Right lobe of liver (tissue), 6 donors: ENCODE measurements at regions of chr5 and their contacts with region 1.

Region 1: DNA sequence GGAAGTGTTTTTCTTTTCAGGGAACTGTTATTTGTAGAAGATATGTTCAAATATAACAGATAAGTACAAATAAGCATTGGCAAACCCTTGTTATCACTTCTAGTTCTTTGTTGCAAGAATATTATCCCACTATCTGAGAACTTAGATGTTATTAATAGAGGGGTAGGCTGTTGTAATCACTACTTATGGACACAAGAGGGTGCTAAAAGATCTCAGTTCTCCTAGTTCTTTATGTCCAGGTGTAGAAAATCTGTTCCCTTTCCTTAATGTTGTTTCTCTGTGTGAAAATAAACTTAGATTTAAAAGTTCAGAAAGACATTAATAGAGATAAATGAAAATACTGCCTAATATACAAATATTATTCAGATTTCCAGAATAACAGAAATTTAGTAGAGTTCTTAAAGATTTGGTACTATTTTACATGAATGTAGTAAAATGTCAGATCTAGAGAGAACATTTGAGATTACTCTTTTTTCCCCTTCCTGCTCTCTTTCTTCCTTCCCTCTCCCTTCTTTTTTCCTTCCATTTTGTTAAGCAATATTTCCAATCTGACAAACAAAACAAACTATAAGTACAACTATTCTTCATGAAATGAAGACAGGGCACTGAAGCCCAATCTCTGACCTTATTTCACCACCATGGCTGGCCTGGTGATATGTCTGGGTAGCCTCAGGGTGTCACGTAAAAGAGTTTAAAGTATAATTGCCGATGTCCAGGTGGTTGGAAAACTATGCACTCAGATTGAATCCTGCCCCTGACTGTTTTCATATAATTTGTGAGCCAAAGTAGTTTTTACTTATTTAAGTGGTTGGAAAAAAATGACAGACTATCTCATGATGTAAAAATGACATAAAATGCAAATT is 43.6 kb upstream of the C5orf46 start:
- DNase-seq: no peak
- ATAC-seq: peak; percentile 87 to 93 (median 91)
- H3K4me3 ChIP-seq: no peak overlapping the region
- H3K27ac ChIP-seq: no peak overlapping the region
- H3K4me1 ChIP-seq: no peaks in the 10 kb centered on the region
- H3K27me3 ChIP-seq: no peaks in the 10 kb centered on the region
- CTCF ChIP-seq: peak; percentile 70 to 80 (median 74)
- POLR2A ChIP-seq: no peak

Region 2: GRCh38 chr5:148113243-148113642 is 163.3 kb after region 1 on chr5:
- intact Hi-C with region 1: loop called (anchors 10 kb)
- DNase-seq: no peak
- ATAC-seq: peak; percentile 33 to 79 (median 47)
- H3K4me3 ChIP-seq: no peak overlapping the region
- H3K27ac ChIP-seq: no peak overlapping the region
- H3K4me1 ChIP-seq: no peaks in the 10 kb centered on the region
- H3K27me3 ChIP-seq: no peaks in the 10 kb centered on the region
- CTCF ChIP-seq: no peak
- POLR2A ChIP-seq: no peak